Natural killer cell (primary cell): ENCODE measurements at regions of chr15 and their contacts with region 1.

Region 1: DNA sequence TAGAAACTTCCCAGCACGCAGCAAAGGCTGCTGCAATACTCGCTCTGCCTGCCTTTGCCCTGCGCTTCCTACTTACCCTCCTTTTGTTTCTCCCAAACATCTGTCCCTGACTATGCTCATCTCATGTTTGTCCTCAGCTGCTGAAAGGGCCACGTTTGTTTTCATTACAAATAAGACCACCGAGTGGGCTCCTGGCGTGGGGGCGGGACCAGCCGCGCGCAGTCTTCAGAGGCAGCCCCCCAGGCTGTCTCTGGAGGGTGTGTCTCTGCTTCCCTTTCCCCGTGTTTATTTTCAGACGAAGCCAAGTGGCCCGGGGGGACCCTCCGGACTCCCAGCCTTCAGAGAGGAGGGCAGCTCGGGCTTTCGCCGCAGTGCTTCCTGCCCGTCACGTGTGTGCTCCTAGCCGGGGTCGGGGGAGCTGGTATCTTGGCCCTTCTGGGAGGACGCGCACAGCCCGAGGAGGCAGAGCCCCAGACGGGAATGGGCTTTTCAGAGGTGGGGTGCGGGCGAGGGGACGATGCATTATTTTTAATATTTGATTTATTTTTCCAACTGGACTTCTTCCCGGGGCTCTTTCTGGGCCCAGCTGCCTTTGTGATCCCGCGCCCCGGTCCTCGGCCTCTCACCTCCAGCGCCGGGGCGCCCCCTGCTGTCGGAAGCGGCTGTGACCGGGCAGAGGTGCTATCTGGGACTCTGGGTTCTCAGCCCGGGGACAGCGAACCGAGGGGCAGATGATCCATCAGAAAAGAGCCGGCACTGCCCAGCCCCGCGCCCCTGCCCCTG is 70.0 kb upstream of the CGNL1 start:
- DNase-seq: peak; percentile 81 to 83
- ATAC-seq: peak; percentile 82 to 94 (median 90)
- H3K4me3 ChIP-seq: peak overlapping the region; percentile 42
- H3K4me3 Mint-ChIP-seq: peak overlapping the region; percentile 72
- H3K27ac ChIP-seq: no peak overlapping the region
- H3K27ac Mint-ChIP-seq: peak overlapping the region in 1 of 2 donors; percentile 35
- H3K4me1 ChIP-seq: peaks cover 14% of the 10 kb centered on the region
- H3K4me1 Mint-ChIP-seq: peaks cover 5 to 16% of the 10 kb centered on the region in 2 donors
- H3K27me3 ChIP-seq: peaks cover 3% of the 10 kb centered on the region
- H3K27me3 Mint-ChIP-seq: peaks cover 10 to 24% of the 10 kb centered on the region in 2 donors
- CTCF ChIP-seq: peak; percentile 89

Region 2: DNA sequence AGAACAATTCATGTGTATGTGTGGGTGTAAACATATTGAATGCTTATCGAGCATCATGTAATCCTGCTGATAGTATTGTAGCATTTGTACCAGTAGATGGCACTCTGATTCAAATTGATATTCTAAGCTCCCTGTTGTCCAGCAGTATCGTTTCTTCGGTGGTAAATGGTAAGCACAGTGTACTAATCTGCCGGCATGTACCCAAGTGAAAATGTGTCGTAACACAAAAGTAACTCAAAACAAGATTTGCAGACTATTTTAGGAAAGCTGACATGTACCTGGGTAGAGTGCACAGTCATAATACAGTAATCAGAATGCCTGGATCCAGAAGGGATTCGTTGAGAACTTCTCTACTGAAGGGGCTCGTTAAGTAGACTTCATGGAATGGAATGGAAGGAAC is 809.7 kb before region 1 on chr15:
- intact Hi-C with region 1: loop called (anchors 2 kb)
- DNase-seq: peak in 1 of 2 donors; percentile 71
- ATAC-seq: peak; percentile 49 to 74 (median 58)
- H3K4me3 ChIP-seq: no peak overlapping the region
- H3K4me3 Mint-ChIP-seq: no peak overlapping the region
- H3K27ac ChIP-seq: no peak overlapping the region
- H3K27ac Mint-ChIP-seq: no peak overlapping the region
- H3K4me1 ChIP-seq: no peaks in the 10 kb centered on the region
- H3K4me1 Mint-ChIP-seq: peaks cover 3 to 4% of the 10 kb centered on the region in 2 donors
- H3K27me3 ChIP-seq: no peaks in the 10 kb centered on the region
- H3K27me3 Mint-ChIP-seq: peaks cover 17 to 32% of the 10 kb centered on the region in 2 donors
- CTCF ChIP-seq: peak; percentile 65

Region 3: GRCh38 chr15:56821721-56822425 is 484.5 kb before region 1 on chr15:
- intact Hi-C with region 1: loop called (anchors 1 kb)
- DNase-seq: peak; percentile 41 to 61
- ATAC-seq: peak; percentile 76 to 85 (median 78)
- H3K4me3 ChIP-seq: no peak overlapping the region
- H3K4me3 Mint-ChIP-seq: no peak overlapping the region
- H3K27ac ChIP-seq: no peak overlapping the region
- H3K27ac Mint-ChIP-seq: no peak overlapping the region
- H3K4me1 ChIP-seq: no peaks in the 10 kb centered on the region
- H3K4me1 Mint-ChIP-seq: no peaks in the 10 kb centered on the region
- H3K27me3 ChIP-seq: no peaks in the 10 kb centered on the region
- H3K27me3 Mint-ChIP-seq: peaks cover 0 to 2% of the 10 kb centered on the region in 2 donors
- CTCF ChIP-seq: peak; percentile 78

Region 4: DNA sequence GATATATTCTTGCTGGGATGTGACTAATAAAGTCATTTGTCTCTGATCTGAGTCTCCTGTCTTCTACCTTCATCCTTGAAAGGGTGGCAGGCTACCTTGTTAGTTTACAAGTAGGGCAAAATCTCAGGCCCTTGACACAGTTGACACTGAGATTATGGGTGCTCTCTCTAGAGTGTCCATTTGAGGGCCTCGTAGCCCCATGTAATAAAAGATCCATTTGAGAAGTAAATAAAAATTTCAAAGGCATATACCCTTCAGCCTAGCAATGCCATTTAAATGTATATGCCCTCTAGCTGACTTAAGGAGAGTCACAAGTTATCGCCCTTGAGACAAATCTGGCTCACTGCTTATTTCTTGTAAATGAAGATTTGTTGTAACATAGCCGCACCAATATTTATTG is 289.3 kb before region 1 on chr15:
- intact Hi-C with region 1: loop called (anchors 10 kb)
- DNase-seq: peak in 1 of 2 donors; percentile 14
- ATAC-seq: no peak
- H3K4me3 ChIP-seq: no peak overlapping the region
- H3K4me3 Mint-ChIP-seq: no peak overlapping the region
- H3K27ac ChIP-seq: no peak overlapping the region
- H3K27ac Mint-ChIP-seq: peak overlapping the region in 1 of 2 donors; percentile 31
- H3K4me1 ChIP-seq: no peaks in the 10 kb centered on the region
- H3K4me1 Mint-ChIP-seq: peaks cover 51 to 57% of the 10 kb centered on the region in 2 donors
- H3K27me3 ChIP-seq: no peaks in the 10 kb centered on the region
- H3K27me3 Mint-ChIP-seq: no peaks in the 10 kb centered on the region
- CTCF ChIP-seq: no peak

Region 5: GRCh38 chr15:57146506-57147201 is 159.7 kb before region 1 on chr15:
- intact Hi-C with region 1: loop called (anchors 1 kb)
- DNase-seq: peak in 1 of 2 donors; percentile 55
- ATAC-seq: peak in 1 of 3 donors; percentile 44
- H3K4me3 ChIP-seq: no peak overlapping the region
- H3K4me3 Mint-ChIP-seq: no peak overlapping the region
- H3K27ac ChIP-seq: no peak overlapping the region
- H3K27ac Mint-ChIP-seq: no peak overlapping the region
- H3K4me1 ChIP-seq: no peaks in the 10 kb centered on the region
- H3K4me1 Mint-ChIP-seq: peaks cover 16 to 24% of the 10 kb centered on the region in 2 donors
- H3K27me3 ChIP-seq: no peaks in the 10 kb centered on the region
- H3K27me3 Mint-ChIP-seq: no peaks in the 10 kb centered on the region
- CTCF ChIP-seq: peak; percentile 70

Region 6: GRCh38 chr15:57198654-57199291 is 107.6 kb before region 1 on chr15:
- intact Hi-C with region 1: no loop called
- DNase-seq: no peak
- ATAC-seq: no peak
- H3K4me3 ChIP-seq: no peak overlapping the region
- H3K4me3 Mint-ChIP-seq: no peak overlapping the region
- H3K27ac ChIP-seq: no peak overlapping the region
- H3K27ac Mint-ChIP-seq: no peak overlapping the region
- H3K4me1 ChIP-seq: no peaks in the 10 kb centered on the region
- H3K4me1 Mint-ChIP-seq: peaks cover 11 to 12% of the 10 kb centered on the region in 2 donors
- H3K27me3 ChIP-seq: no peaks in the 10 kb centered on the region
- H3K27me3 Mint-ChIP-seq: no peaks in the 10 kb centered on the region
- CTCF ChIP-seq: no peak